Panc1 (cell line): ENCODE measurements at regions of chr19 and their contacts with region 1.

Region 1: GRCh38 chr19:40341601-40342482 is 6.4 kb downstream of the C19orf47 start:
- DNase-seq: no peak
- ATAC-seq: peak; percentile 67
- H3K4me3 ChIP-seq: no peak overlapping the region
- H3K27ac ChIP-seq: no peak overlapping the region
- H3K4me1 ChIP-seq: no peaks in the 10 kb centered on the region
- H3K27me3 ChIP-seq: peaks cover 2% of the 10 kb centered on the region; the same call in 1 of the 2 replicates
- CTCF ChIP-seq: no peak

Region 2: DNA sequence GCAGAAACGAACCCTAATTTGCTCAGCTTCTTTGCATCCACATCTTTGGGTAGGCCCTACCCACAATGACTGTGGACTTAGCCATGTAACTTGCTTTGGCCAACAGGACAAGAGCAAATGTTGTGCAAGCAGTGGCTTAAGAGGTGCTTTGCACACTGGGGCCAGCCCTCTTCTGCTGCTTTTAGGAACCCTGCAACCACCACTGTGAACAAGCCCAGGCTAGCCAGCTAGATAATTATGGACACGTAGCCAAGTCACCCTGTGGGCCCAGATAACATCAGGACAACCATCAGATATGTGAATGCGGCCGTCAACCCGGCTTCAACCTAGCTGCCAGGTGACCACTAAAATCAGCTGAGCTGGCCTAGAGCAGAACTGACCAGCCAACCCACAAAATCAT is 10.8 kb before region 1 on chr19:
- CTCF ChIA-PET with region 1: no interaction called
- POLR2A ChIA-PET with region 1: interaction called, 30 read pairs
- in situ Hi-C with region 1: no loop called
- intact Hi-C with region 1: no loop called
- DNase-seq: no peak
- ATAC-seq: no peak
- H3K4me3 ChIP-seq: no peak overlapping the region
- H3K27ac ChIP-seq: no peak overlapping the region
- H3K4me1 ChIP-seq: no peaks in the 10 kb centered on the region
- H3K27me3 ChIP-seq: no peaks in the 10 kb centered on the region
- CTCF ChIP-seq: no peak

Region 3: DNA sequence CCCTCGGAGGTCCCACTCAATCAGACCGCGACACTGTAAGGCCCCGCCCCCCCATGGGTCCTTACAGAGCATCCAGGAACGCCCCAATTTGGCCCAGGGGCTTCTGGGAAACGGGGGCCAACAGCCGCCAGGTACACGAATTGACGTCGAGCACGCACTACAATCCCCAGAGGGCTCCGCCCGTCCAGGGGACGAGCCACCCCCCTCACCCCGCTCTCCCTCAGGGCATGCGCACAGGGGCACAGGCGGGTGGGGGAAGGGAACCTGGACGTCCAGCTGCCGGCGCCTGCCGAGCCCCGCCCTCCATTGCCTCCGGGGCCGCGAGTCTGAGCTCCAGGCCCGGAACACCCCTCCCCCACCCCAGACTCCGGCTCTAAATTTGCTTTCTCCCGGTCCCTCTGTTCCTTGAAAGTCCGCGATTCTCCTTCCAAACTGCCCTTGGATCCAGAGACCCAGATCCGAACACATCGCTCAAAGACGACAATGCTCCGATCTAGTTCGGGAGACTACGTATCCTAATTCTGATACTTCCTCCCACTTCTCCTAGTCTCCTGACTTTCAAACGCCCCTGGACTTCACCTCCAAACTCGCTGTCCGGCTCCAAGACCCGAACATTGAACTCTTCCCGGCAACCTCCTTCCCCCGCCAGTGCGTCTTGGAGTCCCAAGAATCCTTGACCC is 101.4 kb after region 1 on chr19:
- CTCF ChIA-PET with region 1: no interaction called
- POLR2A ChIA-PET with region 1: no interaction called
- in situ Hi-C with region 1: no loop called
- intact Hi-C with region 1: no loop called
- DNase-seq: peak; percentile 93
- ATAC-seq: peak; percentile 88
- H3K4me3 ChIP-seq: peak overlapping the region; percentile 74 to 100
- H3K27ac ChIP-seq: peak overlapping the region; percentile 87
- H3K4me1 ChIP-seq: peaks cover 9% of the 10 kb centered on the region
- H3K27me3 ChIP-seq: no peaks in the 10 kb centered on the region
- CTCF ChIP-seq: no peak